Activated CD4-positive, alpha-beta memory T cell treated with anti-CD3 and anti-CD28 coated beads, Interleukin-2, amount 10 ng/mL, durations not matched to agents 7 days and 5 days (primary cell): ENCODE measurements at regions of chr1 and their contacts with region 1.

Region 1: GRCh38 chr1:23809751-23810171 is 9.2 kb upstream of the GALE start:
- DNase-seq: peak; percentile 86
- H3K4me3 Mint-ChIP-seq: no peak overlapping the region
- H3K27ac Mint-ChIP-seq: peak overlapping the region; percentile 28
- H3K4me1 Mint-ChIP-seq: peaks cover 16% of the 10 kb centered on the region
- H3K27me3 Mint-ChIP-seq: no peaks in the 10 kb centered on the region

Region 2: DNA sequence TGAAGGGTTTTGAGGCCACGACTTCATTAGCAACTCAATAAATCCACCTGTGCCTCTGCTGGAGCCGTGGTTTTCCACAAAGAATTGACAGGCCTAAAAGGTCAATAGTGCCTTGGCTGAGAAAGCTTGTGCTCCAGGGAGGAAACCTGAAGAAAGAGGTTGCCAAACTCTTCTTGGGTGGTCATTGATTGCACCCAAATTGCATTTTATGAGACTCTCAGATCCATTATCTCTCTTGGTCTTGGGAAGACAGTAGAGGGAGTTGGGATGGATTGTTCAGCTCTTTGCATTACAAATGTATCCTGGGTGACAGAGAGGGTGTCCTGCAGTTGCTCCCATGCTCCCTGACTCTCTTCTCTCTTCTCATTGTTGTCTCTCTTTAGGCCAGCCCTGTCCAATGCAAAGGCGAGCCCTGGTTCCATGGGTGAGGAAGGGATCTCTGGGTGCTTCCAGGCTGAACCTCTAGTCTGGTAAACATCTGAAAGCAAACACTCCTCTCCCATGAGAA is 546.3 kb before region 1 on chr1:
- CTCF ChIA-PET with region 1: no interaction called
- POLR2A ChIA-PET with region 1: no interaction called
- DNase-seq: no peak
- H3K4me3 Mint-ChIP-seq: no peak overlapping the region
- H3K27ac Mint-ChIP-seq: no peak overlapping the region
- H3K4me1 Mint-ChIP-seq: no peaks in the 10 kb centered on the region
- H3K27me3 Mint-ChIP-seq: no peaks in the 10 kb centered on the region

Region 3: DNA sequence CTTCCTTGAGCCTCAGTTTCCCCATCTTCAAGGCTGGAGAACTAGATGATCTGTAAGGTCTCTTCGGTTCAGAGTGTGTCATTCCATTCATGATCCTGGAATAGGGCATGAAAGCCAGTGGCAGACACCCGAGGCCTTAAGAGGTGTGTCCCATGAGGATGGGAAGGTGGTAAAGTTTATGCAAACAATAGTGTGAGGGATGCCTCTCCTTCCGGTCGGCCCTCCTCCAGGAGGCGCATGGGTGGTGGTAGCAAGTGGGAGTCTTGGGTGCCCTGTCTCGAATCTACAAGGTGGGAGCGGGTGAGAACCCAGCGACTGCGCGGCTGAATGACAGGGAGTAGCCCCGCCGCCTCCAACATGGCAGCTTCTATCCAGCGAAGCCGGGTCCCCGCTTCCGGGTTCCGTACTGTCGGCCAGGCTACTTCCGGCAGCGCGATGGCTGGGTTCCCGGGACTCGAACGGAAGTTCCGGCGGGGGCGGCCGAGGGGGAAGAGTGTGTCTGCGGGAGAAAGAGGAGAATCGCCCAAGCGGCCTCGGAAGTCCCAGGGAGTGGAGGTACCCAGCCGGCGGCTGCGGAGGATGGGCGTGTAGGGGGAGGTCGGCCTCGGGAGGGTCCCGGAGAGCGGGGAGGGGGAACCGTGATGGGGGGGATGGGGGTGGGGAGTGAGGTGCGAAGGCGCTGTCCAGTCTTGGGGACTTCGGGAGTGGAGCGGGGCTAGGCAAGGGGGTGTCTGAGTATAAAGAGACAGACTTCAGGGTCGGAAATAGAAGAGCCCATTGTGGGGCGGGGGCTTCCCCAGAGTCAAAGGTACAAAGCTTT is 18.9 kb before region 1 on chr1 and contains the start of gene LYPLA2:
- CTCF ChIA-PET with region 1: interaction called, 11 read pairs
- POLR2A ChIA-PET with region 1: interaction called, 3 read pairs
- DNase-seq: peak; percentile 90
- H3K4me3 Mint-ChIP-seq: peak within 1 kb of the TSS; percentile 94
- H3K27ac Mint-ChIP-seq: peak within 1 kb of the TSS; percentile 91
- H3K4me1 Mint-ChIP-seq: peaks cover 32% of the 10 kb centered on the region
- H3K27me3 Mint-ChIP-seq: no peaks in the 10 kb centered on the region
- total RNA-seq, gene LYPLA2: 76.1 to 80.8 TPM

Region 4: GRCh38 chr1:23845163-23845562 is 35.4 kb after region 1 on chr1:
- CTCF ChIA-PET with region 1: interaction called, 12 read pairs
- POLR2A ChIA-PET with region 1: no interaction called
- DNase-seq: no peak
- H3K4me3 Mint-ChIP-seq: no peak overlapping the region
- H3K27ac Mint-ChIP-seq: no peak overlapping the region
- H3K4me1 Mint-ChIP-seq: no peaks in the 10 kb centered on the region
- H3K27me3 Mint-ChIP-seq: peaks cover 7% of the 10 kb centered on the region

Region 5: DNA sequence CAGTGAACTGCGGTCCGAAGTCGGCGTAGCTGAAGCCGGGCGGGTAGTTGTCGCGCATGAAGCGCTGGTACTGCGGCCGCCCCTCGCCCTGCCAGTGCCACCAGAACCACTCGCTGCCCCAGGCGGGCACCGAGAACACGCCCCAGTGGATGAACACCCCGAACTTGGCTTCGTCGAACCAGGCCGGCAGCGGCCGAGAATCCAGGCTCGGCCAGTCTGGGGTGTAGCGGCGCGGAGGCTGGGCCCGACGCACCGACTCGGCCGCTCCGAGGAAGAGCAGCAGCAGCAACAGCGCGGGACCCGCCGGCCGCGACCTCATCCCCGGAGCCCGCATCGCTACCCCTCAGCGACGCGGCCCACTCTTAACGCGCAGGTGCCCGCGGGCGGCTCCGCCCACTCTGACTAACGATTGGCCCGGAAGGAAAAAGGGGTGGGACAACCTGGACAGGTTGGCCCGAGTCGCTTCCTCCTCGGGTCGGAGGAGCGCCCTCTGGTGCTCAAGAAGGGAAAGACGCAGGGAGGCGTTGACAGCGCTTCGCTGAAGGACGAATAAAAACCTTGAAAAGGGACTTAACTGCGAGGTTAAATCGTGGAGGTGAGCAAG is 58.3 kb after region 1 on chr1 and contains the start of gene FUCA1:
- CTCF ChIA-PET with region 1: interaction called, 23 read pairs
- POLR2A ChIA-PET with region 1: interaction called, 4 read pairs
- DNase-seq: peak; percentile 93
- H3K4me3 Mint-ChIP-seq: peak within 1 kb of the TSS; percentile 78
- H3K27ac Mint-ChIP-seq: peak within 1 kb of the TSS; percentile 11
- H3K4me1 Mint-ChIP-seq: peaks cover 18% of the 10 kb centered on the region
- H3K27me3 Mint-ChIP-seq: peaks cover 5% of the 10 kb centered on the region
- total RNA-seq, gene FUCA1: 5.6 to 6.3 TPM

Region 6: GRCh38 chr1:24027838-24028468 is 218.2 kb after region 1 on chr1:
- CTCF ChIA-PET with region 1: interaction called, 10 read pairs
- POLR2A ChIA-PET with region 1: no interaction called
- DNase-seq: no peak
- H3K4me3 Mint-ChIP-seq: no peak overlapping the region
- H3K27ac Mint-ChIP-seq: no peak overlapping the region
- H3K4me1 Mint-ChIP-seq: peaks cover under 1% of the 10 kb centered on the region
- H3K27me3 Mint-ChIP-seq: no peaks in the 10 kb centered on the region